ENCODE measurements at regions of chr20 and their contacts with region 1.

Region 1: DNA sequence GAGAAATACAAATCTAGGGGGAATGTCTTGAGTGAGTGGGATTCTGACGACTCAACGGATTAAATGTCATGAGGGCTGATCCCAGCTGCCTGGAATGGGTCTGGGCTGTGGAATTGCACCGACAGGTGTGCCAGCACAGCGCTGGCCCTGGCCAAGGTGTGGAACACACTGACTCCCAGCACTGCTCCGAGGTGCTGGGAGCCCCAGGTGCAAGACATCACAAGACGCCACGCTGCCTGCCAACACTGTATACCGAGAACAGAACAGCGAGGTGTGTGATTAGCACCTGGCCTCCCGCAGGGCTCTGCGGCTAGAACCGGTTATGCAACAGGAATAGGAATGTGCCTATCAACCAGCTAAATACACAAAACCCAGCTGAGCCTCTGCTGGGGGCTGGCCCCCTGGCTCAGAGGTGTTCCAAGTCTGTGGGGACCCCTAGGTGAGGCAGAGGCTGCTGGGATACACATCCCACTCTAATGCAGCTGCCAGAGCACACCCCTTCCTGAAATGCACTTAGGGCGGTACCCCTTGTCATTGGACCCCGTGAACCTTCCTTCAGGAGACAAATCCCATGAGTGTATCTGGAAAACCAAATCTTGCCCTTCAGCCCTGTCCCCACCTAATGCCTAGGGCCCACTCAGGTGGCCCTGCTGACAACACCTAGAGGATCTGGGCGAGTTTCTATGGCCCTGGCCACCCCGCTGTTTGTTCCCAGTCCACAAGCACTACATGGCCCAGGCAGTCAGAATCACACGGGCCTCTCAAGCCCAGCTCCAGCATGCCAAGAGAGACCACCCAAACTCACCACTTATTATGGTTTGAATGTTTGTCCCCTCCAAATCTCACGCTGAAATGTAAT is 24.9 kb upstream of the APMAP start:
- DNase-seq: peak; percentile 87 to 91
- H3K4me3 ChIP-seq: no peak overlapping the region
- H3K4me3 Mint-ChIP-seq: peak overlapping the region; percentile 63
- H3K27ac Mint-ChIP-seq: peak overlapping the region; percentile 92
- H3K4me1 ChIP-seq: peaks cover 30% of the 10 kb centered on the region
- H3K4me1 Mint-ChIP-seq: peaks cover 28% of the 10 kb centered on the region
- H3K27me3 ChIP-seq: no peaks in the 10 kb centered on the region
- H3K27me3 Mint-ChIP-seq: no peaks in the 10 kb centered on the region
- CTCF ChIP-seq: peak in 1 of 2 experiments; percentile 0

Region 2: DNA sequence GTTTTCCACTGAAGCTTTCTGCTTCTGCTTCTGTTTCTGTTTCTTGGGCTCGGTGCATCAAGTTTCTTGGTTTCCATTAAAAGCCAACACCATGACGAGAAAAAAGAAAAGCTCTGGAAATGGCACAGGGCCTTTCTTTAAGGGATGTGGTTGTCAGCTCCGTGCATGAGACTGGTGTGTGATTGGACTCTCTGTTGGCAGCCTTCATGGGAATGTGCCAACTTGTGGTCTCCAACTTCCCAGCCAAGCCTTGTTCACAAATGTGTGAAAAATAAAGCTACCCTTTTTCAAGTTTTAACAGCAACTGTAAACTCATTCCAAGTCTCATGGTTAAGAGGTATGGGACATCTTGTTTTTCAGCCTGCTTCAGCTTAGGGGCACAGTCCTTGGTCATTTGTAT is 137.1 kb before region 1 on chr20:
- CTCF ChIA-PET with region 1: no interaction called
- POLR2A ChIA-PET with region 1: no interaction called
- intact Hi-C with region 1: no loop called
- DNase-seq: no peak
- H3K4me3 ChIP-seq: no peak overlapping the region
- H3K4me3 Mint-ChIP-seq: no peak overlapping the region
- H3K27ac Mint-ChIP-seq: no peak overlapping the region
- H3K4me1 ChIP-seq: no peaks in the 10 kb centered on the region
- H3K4me1 Mint-ChIP-seq: no peaks in the 10 kb centered on the region
- H3K27me3 ChIP-seq: no peaks in the 10 kb centered on the region
- H3K27me3 Mint-ChIP-seq: peaks cover 15% of the 10 kb centered on the region
- CTCF ChIP-seq: no peak

Region 3: DNA sequence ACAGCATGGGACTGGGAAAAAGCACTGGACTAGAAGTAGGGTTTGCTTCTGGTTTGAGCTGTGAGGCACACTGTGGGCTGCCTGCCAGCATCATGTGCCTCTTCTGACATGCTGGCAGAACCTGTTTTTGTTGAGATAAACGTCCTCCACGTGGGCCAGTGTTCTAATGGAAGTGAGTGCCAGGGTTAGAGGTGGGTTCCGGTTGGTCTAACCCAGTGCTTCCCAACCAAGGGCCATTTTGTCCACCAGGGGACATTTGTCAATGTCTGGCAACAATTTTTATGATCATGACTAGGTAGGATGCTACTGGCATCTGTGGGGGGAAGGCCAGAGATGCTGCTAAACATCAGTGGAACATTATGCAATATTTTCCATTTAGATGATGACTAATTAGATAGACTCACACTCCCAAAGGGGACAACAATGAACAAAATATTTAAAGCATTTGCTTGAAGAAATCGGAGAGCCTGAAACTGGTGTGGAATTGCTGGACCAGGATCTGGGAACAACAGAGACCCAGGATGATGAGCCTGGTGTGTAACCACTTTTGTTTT is 17.1 kb before region 1 on chr20:
- CTCF ChIA-PET with region 1: no interaction called
- POLR2A ChIA-PET with region 1: no interaction called
- intact Hi-C with region 1: no loop called
- DNase-seq: peak; percentile 38 to 58
- H3K4me3 ChIP-seq: no peak overlapping the region
- H3K4me3 Mint-ChIP-seq: no peak overlapping the region
- H3K27ac Mint-ChIP-seq: no peak overlapping the region
- H3K4me1 ChIP-seq: no peaks in the 10 kb centered on the region
- H3K4me1 Mint-ChIP-seq: no peaks in the 10 kb centered on the region
- H3K27me3 ChIP-seq: no peaks in the 10 kb centered on the region
- H3K27me3 Mint-ChIP-seq: no peaks in the 10 kb centered on the region
- CTCF ChIP-seq: no peak

Region 4: GRCh38 chr20:25030007-25030654 is 12.6 kb after region 1 on chr20:
- CTCF ChIA-PET with region 1: interaction called, 3 read pairs
- POLR2A ChIA-PET with region 1: no interaction called
- intact Hi-C with region 1: loop called (anchors 1 kb)
- DNase-seq: no peak
- H3K4me3 ChIP-seq: no peak overlapping the region
- H3K4me3 Mint-ChIP-seq: no peak overlapping the region
- H3K27ac Mint-ChIP-seq: peak overlapping the region; percentile 38
- H3K4me1 ChIP-seq: peaks cover 24% of the 10 kb centered on the region
- H3K4me1 Mint-ChIP-seq: peaks cover 5% of the 10 kb centered on the region
- H3K27me3 ChIP-seq: no peaks in the 10 kb centered on the region
- H3K27me3 Mint-ChIP-seq: no peaks in the 10 kb centered on the region
- CTCF ChIP-seq: no peak

Region 5: DNA sequence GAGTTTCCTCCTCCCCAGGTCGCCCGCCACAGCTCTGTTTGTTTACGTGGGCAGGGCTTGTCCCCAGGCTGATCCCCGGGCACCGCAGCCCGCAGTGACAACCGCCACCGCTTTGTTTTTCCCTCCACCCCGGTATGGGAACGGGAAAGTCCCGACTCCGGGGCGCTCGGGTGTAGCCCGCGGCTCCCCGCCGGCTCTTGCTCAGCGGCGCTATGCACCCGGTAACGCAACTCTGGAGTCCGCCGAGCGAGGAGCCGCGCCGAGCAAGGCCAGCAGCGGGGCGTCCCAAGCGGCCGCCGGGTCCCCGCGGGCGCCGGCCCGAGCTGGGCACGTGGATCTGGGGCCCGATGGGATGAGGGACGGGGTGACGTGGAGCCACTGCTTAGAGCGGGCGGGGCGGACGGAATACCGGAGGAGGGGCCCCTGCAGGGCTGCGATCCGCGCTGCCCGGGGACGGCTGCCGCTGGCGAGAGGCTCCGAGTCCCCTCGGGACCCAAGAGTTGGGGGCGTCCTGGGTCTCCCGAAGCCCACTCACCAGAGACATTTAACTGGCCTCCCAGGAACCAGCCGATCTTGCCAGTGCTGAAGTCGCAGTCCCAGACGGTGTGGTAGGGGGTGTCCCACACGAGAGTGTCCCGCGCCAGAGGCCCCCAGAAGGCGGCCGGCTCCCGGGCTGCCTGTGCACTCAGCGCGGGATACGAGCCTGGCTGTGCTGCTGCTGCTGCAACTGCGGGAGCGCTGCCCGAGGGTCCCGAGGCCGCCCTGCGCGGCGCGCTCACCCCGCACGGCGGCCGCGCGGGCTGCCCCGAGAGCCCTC is 40.0 kb after region 1 on chr20:
- CTCF ChIA-PET with region 1: no interaction called
- POLR2A ChIA-PET with region 1: no interaction called
- intact Hi-C with region 1: loop called (anchors 1 kb)
- DNase-seq: peak; percentile 70 to 76
- H3K4me3 ChIP-seq: peak overlapping the region; percentile 77
- H3K4me3 Mint-ChIP-seq: peak overlapping the region; percentile 72
- H3K27ac Mint-ChIP-seq: peak overlapping the region; percentile 21
- H3K4me1 ChIP-seq: peaks cover 66% of the 10 kb centered on the region
- H3K4me1 Mint-ChIP-seq: peaks cover 30% of the 10 kb centered on the region
- H3K27me3 ChIP-seq: no peaks in the 10 kb centered on the region
- H3K27me3 Mint-ChIP-seq: no peaks in the 10 kb centered on the region
- CTCF ChIP-seq: peak in 1 of 2 experiments; percentile 22

Region 6: DNA sequence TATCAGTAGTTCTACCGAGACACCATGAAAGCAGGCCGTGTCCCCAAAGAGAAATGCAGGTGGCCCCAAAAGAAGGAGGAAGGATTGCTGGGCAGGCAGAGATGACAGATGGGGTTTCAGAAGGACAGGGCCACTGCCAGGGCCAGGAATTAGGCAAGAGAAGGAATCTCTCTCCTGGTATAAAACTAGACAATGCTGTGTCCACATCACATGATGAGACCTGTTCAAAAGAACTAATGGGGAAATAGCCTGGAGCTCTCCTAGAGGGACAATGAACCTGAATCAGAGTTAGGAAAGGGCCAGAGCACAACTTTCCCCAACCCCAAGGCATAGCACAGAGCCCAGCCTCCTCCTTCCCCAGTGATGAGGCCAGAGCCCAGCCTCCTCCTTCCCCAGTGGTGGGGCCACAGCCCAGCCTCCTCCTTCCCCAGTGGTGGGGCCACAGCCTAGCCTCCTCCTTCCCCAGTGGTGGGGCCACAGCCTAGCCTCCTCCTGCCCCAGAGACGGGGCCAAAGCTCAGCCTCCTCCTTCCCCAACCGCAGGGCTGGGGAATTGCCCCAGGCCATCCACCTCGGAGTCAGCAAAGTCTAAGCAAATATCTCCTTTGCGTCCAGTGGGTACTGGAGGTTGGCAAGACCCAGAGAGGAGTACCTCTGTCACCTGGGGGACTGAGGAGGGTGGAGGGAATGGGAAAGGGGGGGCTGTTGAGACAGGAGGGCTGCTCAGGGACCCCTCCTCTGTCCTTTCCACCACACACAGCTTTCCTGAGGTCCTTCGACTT is 86.3 kb after region 1 on chr20:
- CTCF ChIA-PET with region 1: no interaction called
- POLR2A ChIA-PET with region 1: no interaction called
- intact Hi-C with region 1: no loop called
- DNase-seq: no peak
- H3K4me3 ChIP-seq: no peak overlapping the region
- H3K4me3 Mint-ChIP-seq: no peak overlapping the region
- H3K27ac Mint-ChIP-seq: peak overlapping the region; percentile 11
- H3K4me1 ChIP-seq: peaks cover 16% of the 10 kb centered on the region
- H3K4me1 Mint-ChIP-seq: peaks cover 14% of the 10 kb centered on the region
- H3K27me3 ChIP-seq: no peaks in the 10 kb centered on the region
- H3K27me3 Mint-ChIP-seq: peaks cover 8% of the 10 kb centered on the region
- CTCF ChIP-seq: no peak